Naive thymus-derived CD4-positive, alpha-beta T cell (primary cell): ENCODE measurements at regions of chr5 and their contacts with region 1.

Region 1: DNA sequence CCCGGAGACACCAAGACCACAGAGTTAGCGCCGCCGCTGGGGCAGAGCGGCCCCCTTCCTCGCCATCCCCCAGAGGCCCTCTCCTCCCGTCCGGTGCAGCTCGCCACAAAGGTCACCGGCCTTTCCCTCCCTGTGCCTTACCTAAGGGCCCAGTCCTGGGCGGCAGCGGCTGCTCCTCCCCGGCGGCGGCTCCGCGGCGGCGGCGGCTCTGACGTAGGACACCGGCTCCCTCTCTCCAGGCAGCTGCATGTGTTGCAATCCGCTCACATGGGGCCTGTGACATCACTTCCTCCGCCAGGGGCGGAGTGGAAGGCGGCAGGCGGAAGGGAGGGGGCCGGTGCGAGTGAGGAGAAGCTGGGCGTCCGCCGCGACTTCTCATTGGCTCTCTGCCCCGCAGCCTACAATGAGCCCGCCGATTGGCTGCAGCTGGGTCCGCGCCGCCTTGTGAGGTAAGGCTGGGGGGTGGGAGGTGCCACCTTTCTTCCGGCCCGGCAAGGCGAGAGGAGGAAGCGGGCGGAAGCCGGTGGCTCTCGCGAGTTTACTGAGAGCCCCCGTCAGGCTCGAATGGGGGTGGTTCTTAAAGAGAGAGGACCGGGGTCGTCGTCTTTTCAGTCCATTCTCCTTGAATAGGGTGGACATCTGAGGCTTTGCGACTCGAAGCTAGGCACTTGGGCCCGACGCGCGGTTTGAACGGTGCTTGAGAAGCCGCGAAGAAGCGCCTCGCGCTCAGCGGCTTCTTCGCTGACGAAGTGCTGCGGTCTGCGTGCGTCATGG is at the start of gene ETF1:
- DNase-seq: peak; percentile 95 to 100 (median 100)
- ATAC-seq: peak; percentile 95
- H3K4me3 ChIP-seq: peak within 1 kb of the TSS; percentile 87
- H3K4me3 Mint-ChIP-seq: peak within 1 kb of the TSS; percentile 94 to 100 (median 99)
- H3K27ac ChIP-seq: peak within 1 kb of the TSS; percentile 94
- H3K27ac Mint-ChIP-seq: peak within 1 kb of the TSS; percentile 97 to 100 (median 100)
- H3K4me1 ChIP-seq: peaks cover 36 to 41% of the 10 kb centered on the region in 2 donors
- H3K4me1 Mint-ChIP-seq: peaks cover 55 to 91% (median 73%) of the 10 kb centered on the region in 7 donors
- H3K27me3 ChIP-seq: no peaks in the 10 kb centered on the region
- H3K27me3 Mint-ChIP-seq: no peaks in the 10 kb centered on the region
- total RNA-seq, gene ETF1: 40.6 to 137 (median 84.1) TPM

Region 2: GRCh38 chr5:138035605-138036537 is 507.3 kb before region 1 on chr5:
- CTCF ChIA-PET with region 1: no interaction called
- POLR2A ChIA-PET with region 1: no interaction called
- intact Hi-C with region 1: loop called (anchors 2 to 5 kb)
- DNase-seq: peak; percentile 11 to 80 (median 72)
- ATAC-seq: peak; percentile 76
- H3K4me3 ChIP-seq: no peak overlapping the region
- H3K4me3 Mint-ChIP-seq: peak overlapping the region in 9 of 10 donors; percentile 0 to 78 (median 25)
- H3K27ac ChIP-seq: no peak overlapping the region
- H3K27ac Mint-ChIP-seq: peak overlapping the region in 8 of 9 donors; percentile 4 to 89 (median 37)
- H3K4me1 ChIP-seq: peaks cover 4 to 24% of the 10 kb centered on the region in 2 donors
- H3K4me1 Mint-ChIP-seq: peaks cover 15 to 30% (median 24%) of the 10 kb centered on the region in 7 donors
- H3K27me3 ChIP-seq: no peaks in the 10 kb centered on the region
- H3K27me3 Mint-ChIP-seq: no peaks in the 10 kb centered on the region

Region 3: DNA sequence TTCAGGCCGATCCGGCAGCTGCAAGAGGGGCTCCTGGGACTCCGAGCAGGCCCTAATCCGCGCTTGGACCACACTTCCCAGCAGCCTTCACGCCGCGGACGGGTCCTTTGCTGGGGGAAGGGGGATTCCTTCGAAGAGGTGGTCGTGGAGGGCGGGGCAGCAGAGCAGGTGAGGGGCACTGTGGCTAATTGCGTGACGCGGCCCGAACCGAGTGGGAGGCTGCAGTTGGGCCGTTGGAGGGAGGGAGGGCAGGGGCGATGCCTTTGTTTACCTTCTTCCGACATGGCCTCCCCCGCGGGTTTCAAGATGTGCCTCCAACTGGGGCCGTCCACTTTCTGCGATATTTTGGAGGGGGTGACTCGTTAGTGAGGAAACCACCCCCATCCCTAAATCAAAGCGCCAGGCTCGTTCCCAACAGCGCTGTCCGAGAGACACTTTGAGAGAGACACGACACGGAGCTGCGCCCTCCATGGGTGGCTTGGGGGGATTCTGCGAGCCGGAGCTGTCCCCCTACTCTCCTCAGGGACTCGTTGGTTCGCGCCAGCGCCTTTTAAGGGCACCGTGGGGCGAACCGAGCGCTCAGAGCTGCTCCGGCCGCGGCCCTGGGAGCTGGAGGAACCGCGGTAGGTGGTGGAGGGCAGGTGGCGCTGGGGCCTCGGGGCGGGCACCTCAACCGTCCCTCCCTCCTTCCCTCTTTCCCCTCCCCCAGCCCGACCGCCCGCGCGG is 205.3 kb before region 1 on chr5 and contains the start of gene FAM53C:
- CTCF ChIA-PET with region 1: interaction called, 3 read pairs
- POLR2A ChIA-PET with region 1: interaction called, 11 read pairs
- intact Hi-C with region 1: loop called (anchors 1 kb)
- DNase-seq: peak; percentile 87 to 98 (median 93)
- ATAC-seq: peak; percentile 91
- H3K4me3 ChIP-seq: peak within 1 kb of the TSS; percentile 86
- H3K4me3 Mint-ChIP-seq: peak within 1 kb of the TSS; percentile 77 to 98 (median 94)
- H3K27ac ChIP-seq: peak within 1 kb of the TSS; percentile 95
- H3K27ac Mint-ChIP-seq: peak within 1 kb of the TSS; percentile 96 to 100 (median 99)
- H3K4me1 ChIP-seq: peaks cover 17 to 25% of the 10 kb centered on the region in 2 donors
- H3K4me1 Mint-ChIP-seq: peaks cover 16 to 42% (median 39%) of the 10 kb centered on the region in 7 donors
- H3K27me3 ChIP-seq: no peaks in the 10 kb centered on the region
- H3K27me3 Mint-ChIP-seq: no peaks in the 10 kb centered on the region
- total RNA-seq, gene FAM53C: 25.0 to 71.8 (median 27.7) TPM

Region 4: GRCh38 chr5:138503487-138504270 is 39.5 kb before region 1 on chr5:
- CTCF ChIA-PET with region 1: interaction called, 12 read pairs
- POLR2A ChIA-PET with region 1: no interaction called
- intact Hi-C with region 1: no loop called
- DNase-seq: peak in 7 of 9 donors; percentile 30 to 60 (median 49)
- ATAC-seq: peak; percentile 82
- H3K4me3 ChIP-seq: no peak overlapping the region
- H3K4me3 Mint-ChIP-seq: no peak overlapping the region
- H3K27ac ChIP-seq: no peak overlapping the region
- H3K27ac Mint-ChIP-seq: peak overlapping the region in 3 of 9 donors; percentile 9 to 47 (median 32)
- H3K4me1 ChIP-seq: no peaks in the 10 kb centered on the region
- H3K4me1 Mint-ChIP-seq: peaks cover 0 to 5% (median 3%) of the 10 kb centered on the region in 7 donors
- H3K27me3 ChIP-seq: no peaks in the 10 kb centered on the region
- H3K27me3 Mint-ChIP-seq: no peaks in the 10 kb centered on the region

Region 5: GRCh38 chr5:139273572-139274289 is 730.6 kb after region 1 on chr5:
- CTCF ChIA-PET with region 1: no interaction called
- POLR2A ChIA-PET with region 1: no interaction called
- intact Hi-C with region 1: loop called in 1 of 2 experiments (anchors 1 kb)
- DNase-seq: peak; percentile 71 to 95 (median 83)
- ATAC-seq: peak; percentile 99
- H3K4me3 ChIP-seq: peak overlapping the region; percentile 71
- H3K4me3 Mint-ChIP-seq: peak overlapping the region; percentile 77 to 92 (median 90)
- H3K27ac ChIP-seq: peak overlapping the region; percentile 69
- H3K27ac Mint-ChIP-seq: peak overlapping the region; percentile 54 to 92 (median 85)
- H3K4me1 ChIP-seq: peaks cover 26 to 27% of the 10 kb centered on the region in 2 donors
- H3K4me1 Mint-ChIP-seq: peaks cover 30 to 54% (median 47%) of the 10 kb centered on the region in 7 donors
- H3K27me3 ChIP-seq: no peaks in the 10 kb centered on the region
- H3K27me3 Mint-ChIP-seq: peaks cover 0 to 3% (median 0%) of the 10 kb centered on the region in 5 donors

Region 6: GRCh38 chr5:139482050-139482889 is 939.1 kb after region 1 on chr5 and contains the start of gene STING1:
- CTCF ChIA-PET with region 1: no interaction called
- POLR2A ChIA-PET with region 1: interaction called, 3 read pairs
- intact Hi-C with region 1: loop called in 1 of 2 experiments (anchors 1 kb)
- DNase-seq: peak; percentile 29 to 83 (median 71)
- ATAC-seq: peak; percentile 86
- H3K4me3 ChIP-seq: peak within 1 kb of the TSS; percentile 87
- H3K4me3 Mint-ChIP-seq: peak within 1 kb of the TSS; percentile 86 to 99 (median 94)
- H3K27ac ChIP-seq: peak within 1 kb of the TSS; percentile 80
- H3K27ac Mint-ChIP-seq: peak within 1 kb of the TSS; percentile 94 to 99 (median 96)
- H3K4me1 ChIP-seq: peaks cover 21 to 29% of the 10 kb centered on the region in 2 donors
- H3K4me1 Mint-ChIP-seq: peaks cover 26 to 45% (median 39%) of the 10 kb centered on the region in 7 donors
- H3K27me3 ChIP-seq: no peaks in the 10 kb centered on the region
- H3K27me3 Mint-ChIP-seq: no peaks in the 10 kb centered on the region
- total RNA-seq, gene STING1: 124 to 213 (median 130) TPM